Panc1 (cell line): ENCODE measurements at regions of chr13 and their contacts with region 1.

Region 1: DNA sequence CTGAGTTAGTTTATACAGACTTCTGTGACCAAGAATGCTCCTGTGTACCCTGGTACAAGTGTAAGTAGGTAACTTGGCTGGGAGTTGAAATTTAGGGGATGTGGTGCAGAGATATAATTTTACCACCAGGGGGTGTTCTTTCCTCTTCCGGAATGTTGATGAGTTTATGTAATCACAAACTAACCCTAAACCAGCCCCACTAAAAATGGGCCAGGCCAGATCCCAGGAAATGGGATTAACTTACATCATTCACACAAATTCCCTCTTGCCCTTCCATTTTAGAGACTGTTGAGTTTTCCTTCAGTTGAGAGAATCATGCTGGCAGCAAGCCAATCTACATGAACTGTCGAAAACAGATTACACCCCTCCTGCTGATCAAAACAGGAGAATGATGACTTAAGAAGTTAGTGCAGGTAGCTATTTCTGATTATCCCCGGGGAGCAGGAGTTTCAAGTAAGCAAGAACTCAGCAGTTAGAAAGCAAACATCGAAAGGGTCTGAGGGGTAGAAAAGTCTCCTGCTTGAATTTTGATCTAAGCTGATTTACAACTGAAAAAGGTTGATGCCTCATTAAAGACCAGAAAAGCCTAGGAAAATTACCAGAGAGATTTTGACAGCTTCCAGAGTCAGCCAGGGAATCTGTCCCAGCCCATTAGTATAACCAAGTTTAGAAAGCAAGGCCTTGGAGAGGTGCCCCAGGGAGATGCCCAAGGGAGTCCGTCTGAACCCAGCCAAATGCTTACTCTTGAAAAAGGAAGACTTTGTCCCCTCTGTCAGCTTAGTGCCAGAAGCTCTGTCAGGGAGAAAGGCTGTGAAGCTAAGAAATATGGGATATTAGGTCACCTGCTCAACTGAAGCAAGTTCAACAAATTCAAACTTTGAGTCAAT is 32.3 kb upstream of the MED4 start:
- DNase-seq: peak; percentile 42
- ATAC-seq: peak; percentile 70; the same call in 1 of the 2 replicates
- H3K4me3 ChIP-seq: no peak overlapping the region
- H3K27ac ChIP-seq: peak overlapping the region; percentile 13; the same call in 1 of the 2 replicates
- H3K4me1 ChIP-seq: no peaks in the 10 kb centered on the region
- H3K27me3 ChIP-seq: no peaks in the 10 kb centered on the region
- CTCF ChIP-seq: peak; percentile 75

Region 2: DNA sequence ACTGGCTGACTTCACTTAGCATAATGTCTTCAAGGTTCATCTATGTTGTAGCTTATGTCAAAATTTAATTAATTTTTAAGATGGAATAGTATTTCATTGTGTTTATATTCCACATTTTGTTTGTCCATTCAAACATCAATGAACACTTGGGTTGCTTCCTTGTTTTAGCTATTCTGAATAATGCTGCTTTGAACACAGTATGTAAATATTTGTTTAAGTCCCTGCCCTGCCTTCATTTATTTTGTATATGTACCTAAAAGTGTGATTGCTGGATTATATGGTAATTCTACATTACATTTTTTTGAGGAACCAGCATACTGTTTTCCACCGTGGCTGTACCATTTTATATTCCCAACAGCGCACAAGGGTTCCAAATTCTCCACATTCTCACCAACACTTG is 108.6 kb before region 1 on chr13:
- CTCF ChIA-PET with region 1: no interaction called
- POLR2A ChIA-PET with region 1: no interaction called
- in situ Hi-C with region 1: no loop called
- intact Hi-C with region 1: no loop called
- DNase-seq: no peak
- ATAC-seq: no peak
- H3K4me3 ChIP-seq: no peak overlapping the region
- H3K27ac ChIP-seq: no peak overlapping the region
- H3K4me1 ChIP-seq: no peaks in the 10 kb centered on the region
- H3K27me3 ChIP-seq: no peaks in the 10 kb centered on the region
- CTCF ChIP-seq: no peak

Region 3: GRCh38 chr13:48233046-48233907 is 106.1 kb after region 1 on chr13 and contains the start of gene ITM2B:
- CTCF ChIA-PET with region 1: interaction called, 3 read pairs
- POLR2A ChIA-PET with region 1: no interaction called
- in situ Hi-C with region 1: no loop called
- intact Hi-C with region 1: loop called (anchors 5 kb)
- DNase-seq: no peak
- ATAC-seq: peak; percentile 94
- H3K4me3 ChIP-seq: peak within 1 kb of the TSS; percentile 75 to 86
- H3K27ac ChIP-seq: peak within 1 kb of the TSS; percentile 82
- H3K4me1 ChIP-seq: peaks cover 31% of the 10 kb centered on the region
- H3K27me3 ChIP-seq: no peaks in the 10 kb centered on the region
- CTCF ChIP-seq: peak; percentile 58
- total RNA-seq, gene ITM2B: 156 TPM